GM23248 (cell line): ENCODE measurements at regions of chr17 and their contacts with region 1.

Region 1: GRCh38 chr17:35969558-35970380 is 11.5 kb downstream of the CCL16 start:
- DNase-seq: peak; percentile 71
- H3K4me3 ChIP-seq: no peak overlapping the region
- H3K27ac ChIP-seq: no peak overlapping the region
- H3K4me1 ChIP-seq: no peaks in the 10 kb centered on the region
- H3K27me3 ChIP-seq: peaks cover 21% of the 10 kb centered on the region; the same call in 1 of the 2 replicates

Region 2: GRCh38 chr17:35476283-35476820 is 493.4 kb before region 1 on chr17:
- in situ Hi-C with region 1: no loop called
- DNase-seq: no peak
- H3K4me3 ChIP-seq: no peak overlapping the region
- H3K27ac ChIP-seq: no peak overlapping the region
- H3K4me1 ChIP-seq: no peaks in the 10 kb centered on the region
- H3K27me3 ChIP-seq: peaks cover 36% of the 10 kb centered on the region

Region 3: DNA sequence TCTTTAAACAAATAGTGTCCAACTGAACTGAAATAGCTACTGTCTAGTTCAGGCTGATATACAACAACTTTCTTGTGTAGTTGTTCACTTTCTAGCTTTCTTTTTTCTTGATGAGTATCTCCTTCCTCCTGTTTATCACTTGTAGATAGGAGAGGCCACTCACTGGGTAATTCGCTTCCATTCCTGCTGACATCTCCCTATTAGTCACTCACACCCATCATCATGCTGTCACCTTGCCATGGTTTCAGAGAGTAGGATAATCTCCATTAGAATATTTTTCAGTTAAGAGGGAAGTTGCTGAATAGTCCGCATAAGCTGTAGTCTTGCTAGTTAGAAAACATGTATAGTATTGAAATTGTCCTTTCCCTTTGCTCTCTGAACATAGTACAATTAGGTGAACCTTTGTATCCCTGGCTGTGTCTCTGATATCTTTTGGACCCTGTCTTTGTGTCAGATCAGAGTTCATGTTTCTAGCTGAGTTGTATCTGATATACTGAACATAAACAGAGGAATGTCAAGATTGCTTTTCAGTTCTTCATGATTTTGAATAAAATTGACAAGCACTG is 302.7 kb before region 1 on chr17:
- in situ Hi-C with region 1: no loop called
- DNase-seq: peak; percentile 40
- H3K4me3 ChIP-seq: no peak overlapping the region
- H3K27ac ChIP-seq: no peak overlapping the region
- H3K4me1 ChIP-seq: peaks cover 7% of the 10 kb centered on the region; the same call in 1 of the 2 replicates
- H3K27me3 ChIP-seq: no peaks in the 10 kb centered on the region

Region 4: GRCh38 chr17:35774499-35774898 is 195.3 kb before region 1 on chr17:
- in situ Hi-C with region 1: no loop called
- DNase-seq: peak; percentile 41
- H3K4me3 ChIP-seq: no peak overlapping the region
- H3K27ac ChIP-seq: no peak overlapping the region
- H3K4me1 ChIP-seq: peaks cover 17% of the 10 kb centered on the region
- H3K27me3 ChIP-seq: peaks cover 17% of the 10 kb centered on the region

Region 5: GRCh38 chr17:35870906-35871819 is 98.6 kb before region 1 on chr17:
- in situ Hi-C with region 1: no loop called
- DNase-seq: no peak
- H3K4me3 ChIP-seq: no peak overlapping the region
- H3K27ac ChIP-seq: no peak overlapping the region
- H3K4me1 ChIP-seq: peaks cover 4% of the 10 kb centered on the region; the same call in 1 of the 2 replicates
- H3K27me3 ChIP-seq: no peaks in the 10 kb centered on the region

Region 6: GRCh38 chr17:36463916-36464315 is 494.1 kb after region 1 on chr17:
- in situ Hi-C with region 1: loop called (anchors 25 kb)
- DNase-seq: peak; percentile 95
- H3K4me3 ChIP-seq: no peak overlapping the region
- H3K27ac ChIP-seq: no peak overlapping the region
- H3K4me1 ChIP-seq: no peaks in the 10 kb centered on the region
- H3K27me3 ChIP-seq: peaks cover 10% of the 10 kb centered on the region; the same call in 1 of the 2 replicates